CD4-positive, alpha-beta T cell (primary cell): ENCODE measurements at regions of chr22 and their contacts with region 1.

Region 1: GRCh38 chr22:31290494-31291471 is 1.5 kb downstream of the PIK3IP1 start:
- DNase-seq: peak; percentile 93 to 98 (median 96)
- ATAC-seq: peak; percentile 66
- H3K4me3 ChIP-seq: peak overlapping the region; percentile 90
- H3K4me3 Mint-ChIP-seq: peak overlapping the region; percentile 94
- H3K27ac ChIP-seq: peak overlapping the region; percentile 98 to 100
- H3K27ac Mint-ChIP-seq: peak overlapping the region; percentile 98
- H3K4me1 ChIP-seq: peaks cover 69% of the 10 kb centered on the region
- H3K4me1 Mint-ChIP-seq: peaks cover 82% of the 10 kb centered on the region
- H3K27me3 ChIP-seq: no peaks in the 10 kb centered on the region
- H3K27me3 Mint-ChIP-seq: no peaks in the 10 kb centered on the region
- CTCF ChIP-seq: no peak

Region 2: GRCh38 chr22:31107178-31107893 is 183.4 kb before region 1 on chr22 and contains the start of gene SELENOM:
- CTCF ChIA-PET with region 1: no interaction called
- POLR2A ChIA-PET with region 1: interaction called, 11 read pairs
- intact Hi-C with region 1: no loop called
- DNase-seq: peak; percentile 71 to 95 (median 82)
- ATAC-seq: peak; percentile 90
- H3K4me3 ChIP-seq: peak within 1 kb of the TSS; percentile 75
- H3K4me3 Mint-ChIP-seq: peak within 1 kb of the TSS; percentile 97
- H3K27ac ChIP-seq: peak within 1 kb of the TSS; percentile 24 to 51
- H3K27ac Mint-ChIP-seq: peak within 1 kb of the TSS; percentile 87
- H3K4me1 ChIP-seq: peaks cover 31% of the 10 kb centered on the region
- H3K4me1 Mint-ChIP-seq: peaks cover 24% of the 10 kb centered on the region
- H3K27me3 ChIP-seq: no peaks in the 10 kb centered on the region
- H3K27me3 Mint-ChIP-seq: no peaks in the 10 kb centered on the region
- CTCF ChIP-seq: peak; percentile 70
- total RNA-seq, gene SELENOM: 78.0 to 82.4 TPM

Region 3: DNA sequence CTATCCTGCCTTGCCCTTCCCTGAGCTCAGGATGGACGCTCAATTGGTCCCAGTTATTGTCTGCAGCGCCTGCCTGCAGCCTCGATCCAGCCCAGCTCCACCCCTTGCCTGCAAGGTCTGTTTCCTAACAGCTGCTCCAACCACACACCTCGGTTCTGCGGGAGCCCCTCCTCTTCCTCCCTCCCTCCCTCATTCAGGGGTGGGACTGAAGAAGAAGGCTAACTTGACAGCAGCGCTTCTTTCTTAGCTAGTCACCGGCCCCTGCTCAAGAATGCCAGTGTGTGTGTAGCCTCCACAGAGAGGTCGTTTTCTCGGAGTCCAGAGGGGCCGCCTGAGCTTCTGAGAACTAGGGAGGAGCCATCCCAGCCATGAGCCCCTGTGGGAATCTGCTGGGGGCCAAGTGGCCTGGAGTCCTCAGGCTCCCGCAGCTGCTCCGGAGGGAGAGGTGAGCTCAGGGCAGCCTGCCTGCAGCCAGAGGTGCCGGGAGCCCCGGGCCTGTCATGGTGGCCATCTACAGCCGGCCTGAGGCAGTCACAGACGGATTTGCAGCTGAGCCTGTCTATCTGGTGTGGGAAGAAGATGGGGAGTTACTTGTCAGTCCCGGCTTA is 42.5 kb before region 1 on chr22:
- CTCF ChIA-PET with region 1: no interaction called
- POLR2A ChIA-PET with region 1: interaction called, 28 read pairs
- intact Hi-C with region 1: no loop called
- DNase-seq: peak; percentile 50 to 85 (median 64)
- ATAC-seq: peak; percentile 100
- H3K4me3 ChIP-seq: peak overlapping the region; percentile 21
- H3K4me3 Mint-ChIP-seq: peak overlapping the region; percentile 83
- H3K27ac ChIP-seq: no peak overlapping the region
- H3K27ac Mint-ChIP-seq: peak overlapping the region; percentile 34
- H3K4me1 ChIP-seq: peaks cover 33% of the 10 kb centered on the region
- H3K4me1 Mint-ChIP-seq: peaks cover 44% of the 10 kb centered on the region
- H3K27me3 ChIP-seq: no peaks in the 10 kb centered on the region
- H3K27me3 Mint-ChIP-seq: no peaks in the 10 kb centered on the region
- CTCF ChIP-seq: no peak

Region 4: GRCh38 chr22:31278622-31279326 is 12.0 kb before region 1 on chr22:
- CTCF ChIA-PET with region 1: interaction called, 27 read pairs
- POLR2A ChIA-PET with region 1: interaction called, 1,064 read pairs
- intact Hi-C with region 1: loop called (anchors 1 to 2 kb)
- DNase-seq: peak in 11 of 14 experiments; percentile 48 to 87 (median 57)
- ATAC-seq: peak; percentile 73
- H3K4me3 ChIP-seq: peak overlapping the region; percentile 13
- H3K4me3 Mint-ChIP-seq: peak overlapping the region; percentile 79
- H3K27ac ChIP-seq: peak overlapping the region; percentile 75 to 85
- H3K27ac Mint-ChIP-seq: peak overlapping the region; percentile 98
- H3K4me1 ChIP-seq: peaks cover 87% of the 10 kb centered on the region
- H3K4me1 Mint-ChIP-seq: peaks cover 95% of the 10 kb centered on the region
- H3K27me3 ChIP-seq: no peaks in the 10 kb centered on the region
- H3K27me3 Mint-ChIP-seq: no peaks in the 10 kb centered on the region
- CTCF ChIP-seq: no peak

Region 5: DNA sequence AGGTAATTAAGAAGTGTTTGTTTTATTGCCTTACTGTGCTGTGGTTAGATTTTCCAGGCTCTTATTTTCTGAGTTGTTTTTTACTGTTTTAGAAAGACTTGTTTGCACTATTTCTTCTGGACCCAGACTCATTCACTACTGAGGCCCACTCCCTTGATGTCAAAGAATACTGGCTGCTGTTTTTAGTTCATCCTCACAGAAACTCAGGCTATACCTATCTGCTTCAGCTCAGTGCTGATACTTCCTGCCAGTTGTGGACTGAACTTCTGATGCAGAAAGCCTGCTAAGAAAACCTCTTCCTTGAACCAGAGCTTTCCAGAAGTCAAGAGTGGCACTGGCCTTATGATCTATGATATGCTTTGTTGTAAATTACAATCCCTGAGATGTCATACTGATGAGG is 17.4 kb after region 1 on chr22:
- CTCF ChIA-PET with region 1: interaction called, 73 read pairs
- POLR2A ChIA-PET with region 1: interaction called, 113 read pairs
- intact Hi-C with region 1: loop called (anchors 1 kb)
- DNase-seq: peak in 2 of 14 experiments; percentile 31 to 35
- ATAC-seq: peak; percentile 39
- H3K4me3 ChIP-seq: no peak overlapping the region
- H3K4me3 Mint-ChIP-seq: peak overlapping the region; percentile 52
- H3K27ac ChIP-seq: no peak overlapping the region
- H3K27ac Mint-ChIP-seq: peak overlapping the region; percentile 35
- H3K4me1 ChIP-seq: peaks cover 25% of the 10 kb centered on the region
- H3K4me1 Mint-ChIP-seq: peaks cover 66% of the 10 kb centered on the region
- H3K27me3 ChIP-seq: no peaks in the 10 kb centered on the region
- H3K27me3 Mint-ChIP-seq: no peaks in the 10 kb centered on the region
- CTCF ChIP-seq: no peak

Region 6: GRCh38 chr22:31323578-31324550 is 33.1 kb after region 1 on chr22:
- CTCF ChIA-PET with region 1: no interaction called
- POLR2A ChIA-PET with region 1: interaction called, 10 read pairs
- intact Hi-C with region 1: no loop called
- DNase-seq: peak in 2 of 14 experiments; percentile 20 to 39
- ATAC-seq: peak; percentile 24
- H3K4me3 ChIP-seq: no peak overlapping the region
- H3K4me3 Mint-ChIP-seq: no peak overlapping the region
- H3K27ac ChIP-seq: no peak overlapping the region
- H3K27ac Mint-ChIP-seq: peak overlapping the region; percentile 6
- H3K4me1 ChIP-seq: no peaks in the 10 kb centered on the region
- H3K4me1 Mint-ChIP-seq: peaks cover 13% of the 10 kb centered on the region
- H3K27me3 ChIP-seq: no peaks in the 10 kb centered on the region
- H3K27me3 Mint-ChIP-seq: no peaks in the 10 kb centered on the region
- CTCF ChIP-seq: no peak

Region 7: DNA sequence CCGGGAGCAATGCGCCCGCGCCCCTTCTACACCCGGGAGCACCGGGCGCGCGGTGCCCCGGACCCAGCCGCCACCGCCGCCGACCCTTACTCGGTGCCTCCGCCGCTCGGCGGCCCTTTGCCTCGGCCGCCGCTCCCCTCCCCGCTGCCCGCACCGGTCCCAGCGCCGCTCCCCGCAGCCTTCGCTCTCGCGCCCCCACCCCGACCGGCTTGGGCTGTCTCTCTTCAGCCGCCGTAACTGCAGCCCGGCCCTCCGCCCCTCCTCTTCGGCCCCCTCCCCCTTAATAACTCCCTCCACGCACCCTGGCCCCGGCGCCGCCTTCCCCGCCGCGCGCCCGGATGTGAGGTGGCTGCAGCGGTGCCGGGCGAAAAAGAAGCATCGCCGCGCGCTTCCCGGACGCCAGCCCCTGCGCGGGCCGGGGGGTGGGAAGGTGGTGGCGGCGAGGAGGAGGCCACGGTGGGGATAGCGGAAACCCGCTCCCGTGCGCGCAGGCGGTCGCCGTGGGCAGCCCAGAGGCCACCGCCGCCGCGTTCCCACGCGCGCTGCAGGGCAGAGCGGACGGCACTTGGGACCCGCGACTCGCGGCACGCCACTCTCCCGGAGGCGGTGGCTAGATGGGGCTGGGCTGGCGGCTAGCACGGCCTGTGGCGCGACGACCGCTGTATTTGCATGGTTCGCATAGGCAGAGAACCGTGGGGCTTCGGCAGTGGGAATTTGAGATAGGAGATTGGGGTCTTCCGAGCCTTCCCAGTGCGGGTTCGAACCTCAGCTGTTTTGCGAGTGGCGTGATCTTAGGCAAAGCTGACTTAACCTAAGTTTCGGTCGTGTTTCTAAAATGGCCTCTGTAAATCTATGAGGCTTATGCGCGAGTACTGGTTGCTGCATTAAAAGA is 199.1 kb after region 1 on chr22 and contains the start of gene EIF4ENIF1:
- CTCF ChIA-PET with region 1: no interaction called
- POLR2A ChIA-PET with region 1: interaction called, 5 read pairs
- intact Hi-C with region 1: loop called in 1 of 2 experiments (anchors 5 kb)
- DNase-seq: peak; percentile 78 to 93 (median 84)
- ATAC-seq: peak; percentile 77
- H3K4me3 ChIP-seq: peak within 1 kb of the TSS; percentile 78
- H3K4me3 Mint-ChIP-seq: peak within 1 kb of the TSS; percentile 91
- H3K27ac ChIP-seq: peak within 1 kb of the TSS; percentile 88 to 92
- H3K27ac Mint-ChIP-seq: peak within 1 kb of the TSS; percentile 97
- H3K4me1 ChIP-seq: peaks cover 38% of the 10 kb centered on the region
- H3K4me1 Mint-ChIP-seq: peaks cover 57% of the 10 kb centered on the region
- H3K27me3 ChIP-seq: no peaks in the 10 kb centered on the region
- H3K27me3 Mint-ChIP-seq: no peaks in the 10 kb centered on the region
- CTCF ChIP-seq: no peak
- total RNA-seq, gene EIF4ENIF1: 9.4 to 10.6 TPM

Region 8: DNA sequence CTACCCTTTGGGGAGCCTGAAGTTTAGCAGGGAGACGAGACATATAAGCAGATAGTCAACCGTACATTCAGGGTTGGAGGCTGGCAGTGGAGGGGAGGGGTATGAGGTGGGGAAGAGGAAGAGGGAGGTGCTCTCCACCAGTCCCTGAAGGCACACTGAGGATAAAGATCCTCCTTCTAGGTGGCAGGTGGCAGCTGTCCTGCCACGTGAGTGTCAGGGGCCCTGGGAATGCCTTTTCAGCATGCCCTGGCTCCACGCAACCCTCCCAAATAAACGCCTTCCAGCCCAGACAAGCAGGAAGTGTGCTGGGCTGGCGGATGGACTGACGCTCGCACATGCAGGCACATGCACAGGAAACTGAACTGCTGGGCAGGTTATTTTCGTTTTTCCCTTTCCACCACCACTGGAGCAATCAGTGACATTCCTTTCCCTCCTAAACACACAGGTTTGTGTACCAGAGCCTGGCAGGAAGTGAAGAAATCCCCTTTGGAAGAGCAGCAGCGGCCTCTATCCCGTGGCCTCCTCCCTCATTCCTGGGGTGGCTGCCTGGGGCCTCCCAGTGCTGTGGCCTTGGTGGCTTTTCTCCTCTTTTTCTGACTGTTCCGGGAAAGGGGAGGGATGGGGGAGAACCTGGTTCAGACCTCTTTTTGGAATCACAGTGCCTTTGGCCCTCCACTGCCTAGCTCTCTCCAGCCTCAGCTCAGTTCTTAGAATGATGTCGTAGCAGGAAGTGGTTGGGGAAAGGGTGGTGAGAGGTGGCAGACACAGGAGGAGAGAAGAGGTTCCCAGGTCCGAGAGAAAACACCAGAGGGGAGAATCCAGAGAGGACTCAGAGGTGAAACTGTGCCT is 1353.7 kb after region 1 on chr22:
- CTCF ChIA-PET with region 1: no interaction called
- POLR2A ChIA-PET with region 1: no interaction called
- intact Hi-C with region 1: no loop called
- DNase-seq: peak in 11 of 14 experiments; percentile 5 to 56 (median 33)
- ATAC-seq: peak; percentile 77
- H3K4me3 ChIP-seq: peak overlapping the region; percentile 44
- H3K4me3 Mint-ChIP-seq: peak overlapping the region; percentile 82
- H3K27ac ChIP-seq: peak overlapping the region; percentile 66 to 67
- H3K27ac Mint-ChIP-seq: peak overlapping the region; percentile 90
- H3K4me1 ChIP-seq: peaks cover 15% of the 10 kb centered on the region
- H3K4me1 Mint-ChIP-seq: peaks cover 14% of the 10 kb centered on the region
- H3K27me3 ChIP-seq: no peaks in the 10 kb centered on the region
- H3K27me3 Mint-ChIP-seq: no peaks in the 10 kb centered on the region
- CTCF ChIP-seq: no peak